ENCODE measurements at regions of chr5 and their contacts with region 1.

Region 1: DNA sequence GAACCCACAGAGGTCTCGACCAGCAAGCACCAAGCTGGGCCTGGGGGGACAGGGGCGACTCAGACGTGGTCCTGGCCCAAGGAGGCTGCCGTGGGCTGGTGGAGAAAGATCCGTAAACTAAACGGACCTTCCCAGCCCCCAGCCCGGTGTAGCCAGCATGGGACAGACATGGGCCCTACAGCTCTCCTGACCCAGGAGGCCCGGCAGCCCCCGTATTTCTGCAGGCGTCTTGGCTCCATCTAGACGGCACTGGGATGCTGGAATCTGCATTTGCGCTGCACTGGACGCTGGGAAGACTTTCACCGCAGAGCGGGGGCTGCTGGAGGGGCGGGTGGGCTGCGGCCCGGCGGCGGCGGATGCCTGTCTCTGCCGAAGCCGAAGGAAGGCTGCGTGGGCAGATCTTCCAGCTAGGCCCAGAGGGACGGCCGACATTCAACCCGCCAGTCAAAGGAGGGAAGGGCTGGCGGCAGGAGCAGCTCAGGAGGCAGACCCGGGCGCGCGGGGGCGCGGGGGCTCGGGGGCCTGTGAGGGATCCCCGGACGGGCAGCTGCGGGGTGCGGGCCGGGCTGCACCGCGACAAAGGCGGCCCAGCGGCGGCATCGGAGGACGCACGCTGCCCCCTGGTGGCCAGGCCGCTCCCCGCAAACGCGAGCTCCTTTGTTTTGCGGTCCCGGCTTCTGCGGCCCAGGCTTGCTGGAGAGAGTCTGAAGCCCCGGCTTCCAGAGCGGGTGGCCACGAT is 266.2 kb downstream of the NSG2 start:
- DNase-seq: peak; percentile 59 to 83 (median 69)
- ATAC-seq: peak in 3 of 4 donors; percentile 55 to 89 (median 69)
- H3K4me3 ChIP-seq: peak overlapping the region in 11 of 12 donors; percentile 26 to 61 (median 50)
- H3K27ac ChIP-seq: no peak overlapping the region
- H3K4me1 ChIP-seq: peaks cover 0 to 13% (median 4%) of the 10 kb centered on the region in 12 donors
- H3K27me3 ChIP-seq: peaks cover 0 to 36% (median 5%) of the 10 kb centered on the region in 9 donors
- CTCF ChIP-seq: peak; percentile 77 to 96 (median 88)
- POLR2A ChIP-seq: no peak

Region 2: DNA sequence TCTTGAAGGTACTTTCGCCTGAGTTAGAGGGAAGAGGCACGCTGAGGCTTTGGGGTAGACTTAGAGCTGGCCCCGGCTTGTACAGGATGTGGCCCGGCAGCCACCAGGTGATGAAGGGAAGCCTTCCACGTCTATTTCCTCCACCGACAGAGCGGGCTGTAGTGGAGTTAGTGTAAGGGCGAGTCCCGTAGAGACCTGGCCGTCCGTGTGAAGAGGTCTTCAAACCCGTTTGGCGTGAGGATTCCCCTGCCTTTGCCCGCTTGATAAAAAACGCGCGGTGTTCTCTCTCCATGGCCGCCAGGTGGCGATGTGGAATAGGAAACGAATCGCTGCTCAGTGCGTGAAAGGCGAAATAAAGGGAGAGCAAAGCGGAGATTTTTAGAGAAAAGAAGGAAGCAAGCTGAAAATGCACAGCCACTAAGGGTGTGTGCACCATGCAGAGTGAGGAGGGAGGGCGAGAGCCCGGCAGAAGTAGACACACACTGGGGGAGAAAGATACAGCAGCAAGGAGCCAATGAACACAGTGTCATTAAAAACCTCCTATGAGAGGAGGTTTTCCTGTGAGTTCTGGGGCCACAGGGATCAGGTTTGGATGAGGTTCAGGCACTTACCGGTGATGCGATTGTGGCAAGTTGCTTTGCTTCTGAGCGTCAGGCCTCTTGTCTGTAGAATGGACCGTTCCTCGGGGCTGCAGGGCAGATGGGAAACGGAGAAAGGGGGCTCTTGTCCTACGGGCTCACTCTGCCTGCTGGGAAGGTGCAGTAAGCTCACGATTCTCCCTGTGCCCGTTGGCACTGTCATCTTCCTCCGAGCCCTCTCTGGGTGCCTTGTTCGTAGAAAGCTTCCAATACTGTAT is 1017.7 kb before region 1 on chr5:
- intact Hi-C with region 1: loop called in 1 of 10 experiments (anchors 10 kb)
- DNase-seq: peak; percentile 60 to 86 (median 72)
- ATAC-seq: peak; percentile 11 to 65 (median 46)
- H3K4me3 ChIP-seq: peak overlapping the region in 5 of 12 donors; percentile 5 to 32 (median 11)
- H3K27ac ChIP-seq: no peak overlapping the region
- H3K4me1 ChIP-seq: peaks cover 0 to 21% (median 8%) of the 10 kb centered on the region in 12 donors
- H3K27me3 ChIP-seq: peaks cover 0 to 28% (median 0%) of the 10 kb centered on the region in 9 donors
- CTCF ChIP-seq: peak; percentile 77 to 96 (median 86)
- POLR2A ChIP-seq: no peak

Region 3: GRCh38 chr5:173615884-173616576 is 695.7 kb before region 1 on chr5:
- intact Hi-C with region 1: loop called in 9 of 10 experiments (anchors 2 to 10 kb)
- DNase-seq: peak; percentile 52 to 70 (median 57)
- ATAC-seq: peak in 3 of 4 donors; percentile 43 to 70 (median 64)
- H3K4me3 ChIP-seq: peak overlapping the region; percentile 67 to 98 (median 90)
- H3K27ac ChIP-seq: peak overlapping the region; percentile 85 to 95 (median 91)
- H3K4me1 ChIP-seq: peaks cover 0 to 56% (median 36%) of the 10 kb centered on the region in 12 donors
- H3K27me3 ChIP-seq: no peaks in the 10 kb centered on the region
- CTCF ChIP-seq: peak; percentile 25 to 79 (median 58)
- POLR2A ChIP-seq: no peak

Region 4: DNA sequence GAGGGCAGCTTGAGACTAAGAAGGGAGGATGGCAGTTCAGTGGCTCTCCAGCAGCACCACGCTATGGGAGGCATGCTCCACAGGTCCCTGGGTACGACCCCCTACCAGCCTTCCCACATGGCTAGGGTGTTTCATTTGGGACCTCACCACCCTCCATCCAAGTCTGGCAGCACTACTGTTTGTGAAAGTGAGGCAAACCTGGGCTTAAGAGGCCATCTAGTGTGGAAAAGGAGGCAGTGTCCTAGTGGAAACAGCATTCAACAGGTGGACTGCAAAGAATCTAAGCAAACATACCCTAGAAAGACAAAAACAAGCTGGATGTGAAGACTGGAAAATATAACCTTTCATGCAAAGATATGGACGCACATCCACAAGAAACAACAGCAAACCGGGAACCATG is 327.5 kb before region 1 on chr5:
- intact Hi-C with region 1: loop called in 1 of 10 experiments (anchors 10 kb)
- DNase-seq: no peak
- ATAC-seq: peak; percentile 61 to 77 (median 73)
- H3K4me3 ChIP-seq: no peak overlapping the region
- H3K27ac ChIP-seq: no peak overlapping the region
- H3K4me1 ChIP-seq: no peaks in the 10 kb centered on the region
- H3K27me3 ChIP-seq: peaks cover 0 to 11% (median 0%) of the 10 kb centered on the region in 9 donors
- CTCF ChIP-seq: peak; percentile 7 to 53 (median 41)
- POLR2A ChIP-seq: no peak

Region 5: GRCh38 chr5:174045470-174046025 is 266.2 kb before region 1 on chr5 and contains the start of gene NSG2:
- intact Hi-C with region 1: loop called (anchors 1 to 5 kb)
- DNase-seq: peak; percentile 78 to 89 (median 87)
- ATAC-seq: peak; percentile 98 to 100 (median 99)
- H3K4me3 ChIP-seq: no peak within 1 kb of the TSS
- H3K27ac ChIP-seq: no peak within 1 kb of the TSS
- H3K4me1 ChIP-seq: no peaks in the 10 kb centered on the region
- H3K27me3 ChIP-seq: peaks cover 0 to 10% (median 0%) of the 10 kb centered on the region in 9 donors
- CTCF ChIP-seq: peak; percentile 43 to 81 (median 66)
- POLR2A ChIP-seq: no peak
- total RNA-seq, gene NSG2: 0.36 to 1.7 (median 0.50) TPM in 5 of 9 donors, not detected in the others

Region 6: GRCh38 chr5:174245516-174246075 is 66.1 kb before region 1 on chr5:
- intact Hi-C with region 1: no loop called
- DNase-seq: no peak
- ATAC-seq: no peak
- H3K4me3 ChIP-seq: no peak overlapping the region
- H3K27ac ChIP-seq: no peak overlapping the region
- H3K4me1 ChIP-seq: no peaks in the 10 kb centered on the region
- H3K27me3 ChIP-seq: peaks cover 0 to 4% (median 0%) of the 10 kb centered on the region in 9 donors
- CTCF ChIP-seq: no peak
- POLR2A ChIP-seq: no peak

Region 7: DNA sequence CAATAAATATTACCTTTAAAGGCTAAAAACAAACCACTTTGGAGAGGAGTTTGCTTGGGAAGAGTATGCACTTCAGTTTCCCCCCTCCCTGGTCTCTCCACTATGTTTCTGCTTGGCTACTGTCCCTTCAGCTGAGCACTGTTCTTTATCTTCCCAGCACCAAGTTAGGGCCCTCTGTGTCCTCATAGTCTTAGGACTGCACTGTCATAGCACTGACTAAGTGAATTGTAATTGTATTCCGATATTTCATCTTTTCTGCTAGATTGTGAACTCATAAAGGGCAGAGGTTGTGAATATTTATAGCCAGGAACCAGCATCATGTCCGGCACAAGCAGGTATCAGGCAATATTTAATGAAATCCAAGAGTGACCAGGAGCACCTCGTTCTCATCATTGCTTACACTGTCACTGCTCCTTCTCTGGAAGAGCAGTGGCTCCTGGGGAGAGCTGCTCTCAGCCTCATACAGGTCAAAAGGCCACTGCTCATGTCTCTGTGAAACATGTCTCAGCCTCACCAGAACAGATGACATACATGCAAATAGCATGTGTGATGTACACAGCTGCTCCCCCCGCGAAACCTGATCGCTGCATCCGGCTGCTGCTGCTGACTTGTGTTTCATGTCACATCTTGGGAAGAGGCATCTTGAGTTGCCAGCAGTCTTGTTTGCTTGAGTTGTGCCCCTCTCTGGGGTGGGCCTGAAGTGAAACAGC is 132.9 kb after region 1 on chr5:
- intact Hi-C with region 1: no loop called
- DNase-seq: no peak
- ATAC-seq: no peak
- H3K4me3 ChIP-seq: no peak overlapping the region
- H3K27ac ChIP-seq: no peak overlapping the region
- H3K4me1 ChIP-seq: no peaks in the 10 kb centered on the region
- H3K27me3 ChIP-seq: peaks cover 0 to 32% (median 0%) of the 10 kb centered on the region in 9 donors
- CTCF ChIP-seq: no peak
- POLR2A ChIP-seq: no peak

Measured in heart left ventricle (tissue), 16 donors.